WTC11 (cell line): ENCODE measurements at regions of chr16 and their contacts with region 1.

Region 1: DNA sequence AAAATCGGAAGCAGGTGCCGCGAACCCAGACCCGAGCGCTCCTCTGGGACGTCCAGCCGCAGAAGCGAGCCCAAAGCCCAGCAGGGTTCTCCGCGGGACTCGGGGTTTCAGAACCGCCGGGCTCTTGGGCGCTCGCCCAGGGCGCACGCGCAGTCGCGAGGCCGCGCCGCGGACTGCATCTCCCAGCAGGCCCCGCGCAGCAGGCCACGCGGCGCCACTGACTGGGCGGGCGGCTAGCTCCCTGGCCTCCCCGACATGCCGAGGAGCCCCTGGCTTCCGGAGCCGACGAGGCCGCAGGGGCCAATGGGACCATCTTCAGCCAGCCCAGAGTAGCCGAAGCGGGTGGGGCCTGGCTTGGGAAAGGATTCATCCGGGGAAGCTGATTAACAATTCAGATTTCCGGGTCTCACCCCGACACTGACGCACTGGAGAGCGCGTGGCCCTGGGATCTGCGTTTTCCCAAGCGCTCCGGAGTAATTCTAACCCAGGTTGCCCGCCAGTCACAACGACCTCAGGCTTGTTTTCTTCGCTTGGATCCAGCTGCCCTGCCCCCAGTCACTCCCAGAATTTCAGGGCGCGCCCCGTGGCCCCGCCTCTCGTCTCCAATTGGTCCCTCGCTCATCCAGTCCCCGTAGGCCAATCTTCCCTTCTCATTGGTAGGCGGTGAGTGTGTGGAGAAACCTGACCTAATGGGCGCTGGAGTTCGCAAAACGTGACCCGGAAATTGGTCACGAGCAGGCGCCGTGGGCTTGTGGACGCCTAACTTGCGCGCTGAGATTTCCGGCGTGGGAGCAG is at the start of gene ZNF263:
- DNase-seq: peak; percentile 95
- ATAC-seq: peak; percentile 86
- H3K4me3 Mint-ChIP-seq: peak within 1 kb of the TSS; percentile 99
- H3K27ac Mint-ChIP-seq: peak within 1 kb of the TSS; percentile 97
- H3K4me1 Mint-ChIP-seq: peaks cover 21% of the 10 kb centered on the region
- H3K27me3 Mint-ChIP-seq: peaks cover 4% of the 10 kb centered on the region
- CTCF ChIP-seq: no peak
- total RNA-seq, gene ZNF263: 24.9 to 29.5 TPM (median 27.8 TPM) in 3 replicates

Region 2: GRCh38 chr16:2919511-2920255 is 363.2 kb before region 1 on chr16:
- CTCF ChIA-PET with region 1: no interaction called
- POLR2A ChIA-PET with region 1: no interaction called
- DNase-seq: peak; percentile 73
- ATAC-seq: peak; percentile 50; the same call in 1 of the 2 replicates
- H3K4me3 Mint-ChIP-seq: no peak overlapping the region
- H3K27ac Mint-ChIP-seq: peak overlapping the region; percentile 72; the same call in 1 of the 2 replicates
- H3K4me1 Mint-ChIP-seq: no peaks in the 10 kb centered on the region; the same call in 1 of the 2 replicates
- H3K27me3 Mint-ChIP-seq: no peaks in the 10 kb centered on the region
- CTCF ChIP-seq: peak; percentile 93

Region 3: GRCh38 chr16:3143612-3144320 is 139.2 kb before region 1 on chr16:
- CTCF ChIA-PET with region 1: no interaction called
- POLR2A ChIA-PET with region 1: no interaction called
- DNase-seq: no peak
- ATAC-seq: no peak
- H3K4me3 Mint-ChIP-seq: no peak overlapping the region
- H3K27ac Mint-ChIP-seq: no peak overlapping the region; the same call in 1 of the 2 replicates
- H3K4me1 Mint-ChIP-seq: no peaks in the 10 kb centered on the region
- H3K27me3 Mint-ChIP-seq: peaks cover 11% of the 10 kb centered on the region
- CTCF ChIP-seq: no peak

Region 4: DNA sequence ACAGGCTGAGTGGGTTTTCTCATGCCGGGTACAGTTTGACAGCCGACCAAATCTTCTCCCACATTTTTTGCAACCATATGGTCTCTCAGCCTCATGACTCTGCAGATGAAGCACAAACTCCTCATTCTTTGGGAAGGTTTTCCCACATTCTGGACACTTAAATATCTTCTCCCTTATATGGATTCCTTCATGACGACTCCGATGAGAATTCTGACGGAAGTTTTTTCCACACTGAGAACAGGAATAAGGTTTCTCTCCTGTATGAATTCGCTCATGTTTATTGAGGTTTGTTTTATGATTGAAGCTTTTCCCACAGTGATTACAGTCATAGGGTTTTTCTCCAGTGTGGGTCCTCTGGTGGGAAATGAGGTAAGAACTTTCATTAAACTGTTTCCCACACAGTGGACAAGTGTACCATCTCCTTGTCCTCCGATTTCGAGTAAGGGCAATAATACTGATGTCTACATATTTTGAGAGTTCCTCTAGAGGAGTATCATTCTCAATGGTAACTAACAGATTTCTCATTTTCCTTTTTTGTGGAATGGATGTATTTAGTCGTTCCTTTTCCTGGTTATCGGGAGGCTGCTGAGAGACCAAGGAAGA is 58.9 kb before region 1 on chr16:
- CTCF ChIA-PET with region 1: no interaction called
- POLR2A ChIA-PET with region 1: no interaction called
- DNase-seq: no peak
- ATAC-seq: no peak
- H3K4me3 Mint-ChIP-seq: no peak overlapping the region
- H3K27ac Mint-ChIP-seq: no peak overlapping the region
- H3K4me1 Mint-ChIP-seq: no peaks in the 10 kb centered on the region
- H3K27me3 Mint-ChIP-seq: peaks cover 6% of the 10 kb centered on the region; the same call in 1 of the 2 replicates
- CTCF ChIP-seq: no peak

Region 5: GRCh38 chr16:3266873-3267537 is 15.9 kb before region 1 on chr16:
- CTCF ChIA-PET with region 1: interaction called, 19 read pairs
- POLR2A ChIA-PET with region 1: interaction called, 4 read pairs
- DNase-seq: no peak
- ATAC-seq: peak; percentile 12; the same call in 1 of the 2 replicates
- H3K4me3 Mint-ChIP-seq: no peak overlapping the region
- H3K27ac Mint-ChIP-seq: no peak overlapping the region
- H3K4me1 Mint-ChIP-seq: peaks cover 6% of the 10 kb centered on the region; the same call in 1 of the 2 replicates
- H3K27me3 Mint-ChIP-seq: peaks cover 48% of the 10 kb centered on the region
- CTCF ChIP-seq: peak; percentile 56; the same call in 1 of the 2 replicates

Region 6: GRCh38 chr16:3305109-3306068 is 22.5 kb after region 1 on chr16 and contains the starts of genes TIGD7 and ZNF75A:
- CTCF ChIA-PET with region 1: no interaction called
- POLR2A ChIA-PET with region 1: interaction called, 12 read pairs
- DNase-seq: peak; percentile 84
- ATAC-seq: peak; percentile 98
- H3K4me3 Mint-ChIP-seq: peak within 1 kb of the TSS; percentile 77
- H3K27ac Mint-ChIP-seq: no peak within 1 kb of the TSS; the same call in 1 of the 2 replicates
- H3K4me1 Mint-ChIP-seq: peaks cover 8% of the 10 kb centered on the region
- H3K27me3 Mint-ChIP-seq: peaks cover 25% of the 10 kb centered on the region
- CTCF ChIP-seq: no peak
- total RNA-seq, gene TIGD7: 5.3 to 7.4 TPM (median 7.0 TPM) in 3 replicates
- total RNA-seq, gene ZNF75A: 21.8 to 31.5 TPM (median 23.5 TPM) in 3 replicates

Region 7: DNA sequence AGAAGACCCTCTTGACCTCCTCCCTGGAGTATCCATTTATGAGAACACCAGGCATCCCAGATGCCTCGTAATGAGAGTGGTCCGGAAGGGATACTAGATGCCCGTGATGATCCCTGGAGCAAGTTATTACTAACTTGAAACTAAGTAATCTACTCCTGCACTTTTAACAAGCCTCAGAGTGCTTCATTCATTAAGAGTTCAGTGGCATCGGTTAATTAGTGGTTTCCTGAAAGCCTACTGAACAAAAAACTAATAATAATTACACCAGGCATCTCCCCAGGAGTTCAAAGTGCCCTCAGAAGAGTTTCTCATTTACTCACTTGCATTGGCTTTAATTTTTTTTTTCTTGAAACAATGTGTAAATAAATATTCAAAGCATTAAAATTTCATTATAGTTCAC is 44.6 kb after region 1 on chr16:
- CTCF ChIA-PET with region 1: no interaction called
- POLR2A ChIA-PET with region 1: no interaction called
- DNase-seq: no peak
- ATAC-seq: no peak
- H3K4me3 Mint-ChIP-seq: no peak overlapping the region
- H3K27ac Mint-ChIP-seq: no peak overlapping the region
- H3K4me1 Mint-ChIP-seq: no peaks in the 10 kb centered on the region
- H3K27me3 Mint-ChIP-seq: peaks cover 30% of the 10 kb centered on the region
- CTCF ChIP-seq: no peak